Activated CD4-positive, alpha-beta T cell treated with anti-CD3 and anti-CD28 coated beads for 36 hours (primary cell): ENCODE measurements at regions of chr18 and their contacts with region 1.

Region 1: GRCh38 chr18:80108728-80109675 is at the start of gene ADNP2:
- DNase-seq: peak; percentile 92
- ATAC-seq: peak; percentile 83
- H3K4me3 Mint-ChIP-seq: peak within 1 kb of the TSS; percentile 77
- H3K27ac Mint-ChIP-seq: peak within 1 kb of the TSS; percentile 86
- H3K4me1 Mint-ChIP-seq: peaks cover 48% of the 10 kb centered on the region
- H3K27me3 Mint-ChIP-seq: no peaks in the 10 kb centered on the region
- total RNA-seq, gene ADNP2: 22.8 to 25.7 TPM

Region 2: GRCh38 chr18:79068937-79069791 is 1039.8 kb before region 1 on chr18 and contains the start of gene ATP9B:
- CTCF ChIA-PET with region 1: no interaction called
- POLR2A ChIA-PET with region 1: no interaction called
- intact Hi-C with region 1: loop called in 1 of 2 experiments (anchors 2 kb)
- DNase-seq: peak; percentile 99
- ATAC-seq: peak; percentile 83
- H3K4me3 Mint-ChIP-seq: peak within 1 kb of the TSS; percentile 87
- H3K27ac Mint-ChIP-seq: peak within 1 kb of the TSS; percentile 99
- H3K4me1 Mint-ChIP-seq: peaks cover 38% of the 10 kb centered on the region
- H3K27me3 Mint-ChIP-seq: peaks cover 11% of the 10 kb centered on the region
- total RNA-seq, gene ATP9B: 19.4 to 20.8 TPM

Region 3: DNA sequence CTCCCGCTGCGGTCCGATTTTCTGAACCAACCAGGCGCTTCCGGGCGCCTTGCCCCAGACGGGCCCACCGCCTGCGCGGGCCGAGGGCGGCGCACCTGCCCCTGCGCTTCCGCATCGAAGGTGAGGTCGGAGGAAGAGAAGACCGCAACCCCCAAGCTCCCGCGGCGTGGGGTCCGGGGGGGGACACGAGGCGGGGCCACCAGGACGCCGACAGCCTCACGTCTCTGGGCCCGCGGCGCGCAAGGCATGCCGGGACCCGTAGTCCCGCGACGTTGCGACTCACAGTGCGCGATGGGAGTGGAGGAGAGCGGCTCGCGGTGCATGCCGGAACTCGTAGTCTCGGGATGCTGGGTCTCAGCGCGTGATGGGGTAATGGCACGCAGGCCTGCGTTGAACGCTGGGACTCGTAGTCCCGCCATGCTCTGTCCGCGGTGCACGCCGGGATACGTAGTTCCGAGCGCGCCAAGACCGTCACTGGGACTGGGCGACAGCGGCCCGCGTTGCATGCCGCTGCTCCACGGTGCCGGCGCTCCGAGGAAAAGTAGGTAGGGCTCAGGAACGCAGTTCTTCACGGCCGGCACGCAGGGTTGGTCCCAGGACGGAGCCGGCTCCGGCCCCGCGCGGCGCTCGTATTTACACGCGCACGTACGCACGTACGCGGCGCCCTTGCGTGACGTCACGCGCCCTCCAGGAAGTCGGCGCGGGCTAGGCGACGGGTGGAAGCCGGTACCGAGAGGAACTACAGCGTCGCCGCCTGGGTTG is 429.7 kb before region 1 on chr18 and contains the start of gene CTDP1:
- CTCF ChIA-PET with region 1: no interaction called
- POLR2A ChIA-PET with region 1: no interaction called
- intact Hi-C with region 1: loop called (anchors 1 to 2 kb)
- DNase-seq: peak; percentile 99
- ATAC-seq: peak; percentile 91
- H3K4me3 Mint-ChIP-seq: peak within 1 kb of the TSS; percentile 90
- H3K27ac Mint-ChIP-seq: peak within 1 kb of the TSS; percentile 97
- H3K4me1 Mint-ChIP-seq: peaks cover 65% of the 10 kb centered on the region
- H3K27me3 Mint-ChIP-seq: no peaks in the 10 kb centered on the region
- total RNA-seq, gene CTDP1: 36.7 to 45.5 TPM

Region 4: DNA sequence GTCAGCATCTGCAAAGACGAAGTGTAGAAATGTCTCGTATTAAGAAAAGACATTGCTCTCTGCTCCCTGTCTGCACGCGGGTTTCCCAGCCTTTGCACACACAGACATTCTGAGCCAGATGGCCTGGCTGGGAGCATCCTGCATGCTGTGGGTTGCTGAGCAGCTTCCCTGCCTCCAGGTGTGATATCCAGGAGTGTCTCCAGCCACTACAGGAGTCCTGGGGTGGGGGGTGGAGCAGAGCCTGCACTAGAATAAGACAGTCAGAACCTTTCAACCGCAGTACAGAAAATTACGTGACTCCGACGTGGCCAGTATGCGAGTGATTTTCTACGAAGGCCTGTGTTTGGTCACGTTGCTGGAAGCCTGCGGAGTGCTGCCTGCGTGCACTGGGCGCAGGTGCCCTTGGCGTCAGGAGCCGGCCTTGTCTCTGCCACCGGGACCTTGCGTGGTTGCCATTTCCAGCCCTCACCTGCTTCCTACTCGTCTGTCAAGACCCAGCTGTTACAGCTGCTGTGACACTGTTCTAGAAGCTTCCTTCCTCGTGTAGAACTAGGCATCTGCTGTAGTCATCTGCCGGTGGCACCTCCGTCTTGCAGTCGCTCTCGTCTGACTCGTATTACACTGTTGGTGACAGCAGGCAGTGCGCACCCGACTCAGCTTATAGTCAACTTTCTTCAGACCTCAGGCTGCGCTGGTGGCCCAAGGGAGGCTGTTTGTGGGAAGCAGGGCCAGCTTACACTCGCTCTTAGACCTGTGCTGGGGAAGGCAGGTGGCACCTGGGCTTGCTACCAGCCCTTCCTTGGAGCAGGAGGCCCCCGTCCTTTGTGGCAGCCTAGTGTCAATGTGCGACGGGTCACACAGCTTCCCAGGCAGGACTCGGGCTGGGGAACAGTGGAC is 418.2 kb before region 1 on chr18:
- CTCF ChIA-PET with region 1: no interaction called
- POLR2A ChIA-PET with region 1: no interaction called
- intact Hi-C with region 1: no loop called
- DNase-seq: no peak
- ATAC-seq: peak; percentile 43
- H3K4me3 Mint-ChIP-seq: no peak overlapping the region
- H3K27ac Mint-ChIP-seq: peak overlapping the region; percentile 60
- H3K4me1 Mint-ChIP-seq: peaks cover 35% of the 10 kb centered on the region
- H3K27me3 Mint-ChIP-seq: no peaks in the 10 kb centered on the region

Region 5: DNA sequence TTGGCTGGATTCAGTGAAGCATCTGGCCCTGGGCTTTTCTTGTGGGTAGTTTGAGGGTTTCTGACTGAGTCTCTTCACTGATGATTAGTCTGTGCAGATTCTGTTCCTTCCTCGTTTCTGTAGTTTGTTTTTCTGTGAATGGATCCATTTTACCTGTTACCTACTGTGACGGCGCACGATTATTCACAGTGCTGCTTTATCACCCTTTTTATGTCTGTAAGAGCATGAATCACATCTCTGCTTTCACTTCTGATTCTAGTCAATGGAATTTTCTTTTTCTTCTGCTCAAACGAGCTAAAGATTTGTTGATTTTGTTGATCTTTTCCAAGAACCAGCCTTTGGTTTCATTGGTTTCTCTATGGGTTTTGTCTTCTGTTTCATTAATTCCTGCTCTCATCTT is 218.3 kb before region 1 on chr18:
- CTCF ChIA-PET with region 1: no interaction called
- POLR2A ChIA-PET with region 1: no interaction called
- intact Hi-C with region 1: loop called in 1 of 2 experiments (anchors 5 kb)
- DNase-seq: peak; percentile 67
- ATAC-seq: peak; percentile 98
- H3K4me3 Mint-ChIP-seq: no peak overlapping the region
- H3K27ac Mint-ChIP-seq: peak overlapping the region; percentile 83
- H3K4me1 Mint-ChIP-seq: peaks cover 12% of the 10 kb centered on the region
- H3K27me3 Mint-ChIP-seq: no peaks in the 10 kb centered on the region

Region 6: GRCh38 chr18:79951578-79952455 is 157.2 kb before region 1 on chr18 and contains the start of gene SLC66A2:
- CTCF ChIA-PET with region 1: no interaction called
- POLR2A ChIA-PET with region 1: no interaction called
- intact Hi-C with region 1: loop called in 1 of 2 experiments (anchors 1 kb)
- DNase-seq: peak; percentile 97
- ATAC-seq: peak; percentile 87
- H3K4me3 Mint-ChIP-seq: peak within 1 kb of the TSS; percentile 82
- H3K27ac Mint-ChIP-seq: peak within 1 kb of the TSS; percentile 81
- H3K4me1 Mint-ChIP-seq: peaks cover 39% of the 10 kb centered on the region
- H3K27me3 Mint-ChIP-seq: no peaks in the 10 kb centered on the region
- total RNA-seq, gene SLC66A2: 23.4 to 28.5 TPM

Region 7: DNA sequence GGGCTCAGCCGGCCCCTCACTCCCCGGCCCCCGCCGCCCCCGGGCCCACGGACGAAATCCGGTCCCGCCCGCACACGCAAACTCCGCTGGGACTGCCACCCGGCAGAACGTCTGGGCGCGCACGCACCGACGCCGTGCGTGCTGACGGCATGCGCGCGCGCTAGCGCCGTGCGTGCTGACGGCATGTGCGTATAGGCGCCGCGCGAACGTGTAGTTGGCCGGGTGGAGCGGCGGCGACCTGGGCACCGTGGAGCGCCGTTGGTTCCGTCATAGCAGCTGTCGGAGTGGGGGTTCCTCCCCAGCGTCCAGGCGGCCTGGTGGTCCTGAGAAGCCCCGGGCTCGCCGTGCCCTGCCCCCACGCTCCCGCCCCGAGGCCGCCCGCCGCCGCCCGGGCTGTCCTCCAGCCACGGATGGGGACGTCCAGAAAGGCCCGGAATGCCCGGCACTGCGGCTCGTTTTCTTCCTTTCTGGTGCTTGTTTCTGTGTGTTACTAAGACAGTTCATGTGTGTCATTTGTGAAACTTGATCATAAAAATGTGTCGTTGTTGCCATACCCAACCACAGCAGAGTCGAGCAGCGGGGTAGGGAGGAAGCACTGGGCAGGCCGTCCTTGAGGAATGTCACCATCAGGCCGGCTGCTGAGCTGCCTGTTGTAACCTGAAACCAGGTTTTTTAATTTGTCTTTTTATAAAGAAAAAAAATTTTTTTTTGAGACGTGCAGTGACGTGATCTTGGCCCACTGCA is 120.4 kb before region 1 on chr18 and contains the start of gene TXNL4A:
- CTCF ChIA-PET with region 1: interaction called, 5 read pairs
- POLR2A ChIA-PET with region 1: no interaction called
- intact Hi-C with region 1: loop called (anchors 1 to 5 kb)
- DNase-seq: peak; percentile 92
- ATAC-seq: peak; percentile 98
- H3K4me3 Mint-ChIP-seq: peak within 1 kb of the TSS; percentile 92
- H3K27ac Mint-ChIP-seq: peak within 1 kb of the TSS; percentile 98
- H3K4me1 Mint-ChIP-seq: peaks cover 31% of the 10 kb centered on the region
- H3K27me3 Mint-ChIP-seq: no peaks in the 10 kb centered on the region
- total RNA-seq, gene TXNL4A: 150 to 194 TPM

Region 8: GRCh38 chr18:80147418-80148325 is 38.7 kb after region 1 on chr18:
- CTCF ChIA-PET with region 1: interaction called, 3 read pairs
- POLR2A ChIA-PET with region 1: no interaction called
- intact Hi-C with region 1: loop called in 1 of 2 experiments (anchors 1 kb)
- DNase-seq: peak; percentile 86
- ATAC-seq: peak; percentile 87
- H3K4me3 Mint-ChIP-seq: peak overlapping the region; percentile 74
- H3K27ac Mint-ChIP-seq: no peak overlapping the region
- H3K4me1 Mint-ChIP-seq: peaks cover 15% of the 10 kb centered on the region
- H3K27me3 Mint-ChIP-seq: peaks cover 9% of the 10 kb centered on the region

Region 9: GRCh38 chr18:80210312-80211083 is 101.5 kb after region 1 on chr18:
- CTCF ChIA-PET with region 1: no interaction called
- POLR2A ChIA-PET with region 1: no interaction called
- intact Hi-C with region 1: no loop called
- DNase-seq: no peak
- ATAC-seq: no peak
- H3K4me3 Mint-ChIP-seq: no peak overlapping the region
- H3K27ac Mint-ChIP-seq: no peak overlapping the region
- H3K4me1 Mint-ChIP-seq: no peaks in the 10 kb centered on the region
- H3K27me3 Mint-ChIP-seq: peaks cover 36% of the 10 kb centered on the region